ENCODE measurements at regions of chr3 and their contacts with region 1.

Region 1: DNA sequence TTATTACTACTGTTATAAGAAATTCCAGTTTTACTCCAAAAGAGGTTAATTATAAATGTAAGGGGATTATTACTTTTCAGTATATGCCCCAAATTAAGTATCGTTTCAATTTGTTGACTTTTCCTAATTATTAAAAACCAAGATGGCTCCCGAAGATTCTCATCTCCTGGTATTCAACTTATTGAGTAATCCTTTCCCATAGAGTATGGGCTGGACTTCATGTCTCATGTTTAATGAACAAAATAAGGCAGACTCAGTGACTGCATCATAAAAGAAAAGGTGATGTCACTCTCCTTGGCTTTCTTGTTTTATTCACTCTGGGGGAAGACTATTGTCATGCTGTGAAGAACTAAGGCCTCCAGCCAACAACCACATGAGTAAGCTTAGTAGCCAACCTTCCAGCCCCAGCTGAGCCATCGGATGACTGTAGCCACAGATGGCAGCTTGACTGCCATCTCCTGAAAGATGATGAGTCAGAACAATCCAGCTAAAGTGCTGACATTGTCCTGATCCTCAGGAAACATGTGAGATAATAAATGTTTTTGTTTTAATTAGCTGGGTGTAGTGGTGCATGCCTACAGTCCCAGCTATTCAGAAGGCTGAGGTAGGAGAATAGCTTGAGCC is 17.3 kb downstream of the IGF2BP2 start:
- DNase-seq: no peak
- H3K4me3 ChIP-seq: no peak overlapping the region
- H3K27ac ChIP-seq: no peak overlapping the region
- H3K4me1 ChIP-seq: peaks cover 0 to 6% (median 0%) of the 10 kb centered on the region in 4 donors
- H3K27me3 ChIP-seq: no peaks in the 10 kb centered on the region
- CTCF ChIP-seq: no peak
- EP300 ChIP-seq: no peak
- POLR2A ChIP-seq: no peak

Region 2: DNA sequence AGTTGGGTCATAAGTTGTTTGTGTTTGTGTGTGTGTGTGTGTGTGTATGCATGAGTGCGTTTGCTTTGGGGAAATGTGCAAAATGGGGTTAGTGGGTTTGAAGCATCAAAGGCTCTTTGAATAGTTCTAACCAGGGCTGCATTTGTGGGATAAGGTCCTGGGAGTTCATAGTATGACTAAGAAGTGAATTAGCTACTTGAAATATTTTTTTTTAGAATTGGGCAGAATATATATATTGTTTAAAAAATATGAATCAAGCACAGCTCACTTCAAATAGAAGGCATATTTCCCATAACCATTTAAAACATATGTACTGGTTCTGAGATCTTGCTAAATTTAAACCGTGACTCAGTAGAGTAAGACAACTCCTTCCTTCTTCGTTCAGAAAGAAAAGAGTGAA is 25.8 kb before region 1 on chr3:
- in situ Hi-C with region 1: no loop called
- intact Hi-C with region 1: loop called (anchors 1 kb)
- DNase-seq: no peak
- H3K4me3 ChIP-seq: no peak overlapping the region
- H3K27ac ChIP-seq: no peak overlapping the region
- H3K4me1 ChIP-seq: peaks cover 0 to 3% (median 0%) of the 10 kb centered on the region in 4 donors
- H3K27me3 ChIP-seq: no peaks in the 10 kb centered on the region
- CTCF ChIP-seq: no peak
- EP300 ChIP-seq: no peak
- POLR2A ChIP-seq: no peak

Measured in transverse colon (tissue), 4 donors.